MCF 10A (cell line): ENCODE measurements at regions of chr7 and their contacts with region 1.

Region 1: DNA sequence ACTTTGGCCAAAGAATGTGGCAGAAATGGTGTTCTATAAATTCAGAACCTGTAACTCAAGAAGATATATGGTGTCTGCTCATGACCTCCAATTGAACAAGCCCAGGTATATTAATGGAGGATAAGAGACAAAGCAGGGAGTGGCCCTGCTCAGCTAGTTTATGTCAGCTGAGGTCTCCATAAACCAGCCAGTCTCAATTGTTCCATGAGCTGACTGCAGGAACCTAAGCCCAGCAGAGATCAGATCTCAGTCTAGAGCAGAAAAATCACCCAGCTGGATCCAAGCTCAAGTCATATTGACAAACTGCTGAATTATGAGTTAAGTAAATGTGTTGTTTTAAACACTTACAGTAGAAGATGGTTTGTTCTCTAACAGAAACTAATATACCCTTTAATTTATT is 105.5 kb upstream of the SGCE start:
- DNase-seq: no peak
- H3K4me3 Mint-ChIP-seq: no peak overlapping the region
- H3K27ac Mint-ChIP-seq: no peak overlapping the region
- H3K4me1 Mint-ChIP-seq: no peaks in the 10 kb centered on the region
- H3K27me3 Mint-ChIP-seq: no peaks in the 10 kb centered on the region
- CTCF ChIP-seq: no peak

Region 2: GRCh38 chr7:94258418-94259300 is 502.8 kb before region 1 on chr7:
- CTCF ChIA-PET with region 1: no interaction called
- POLR2A ChIA-PET with region 1: no interaction called
- intact Hi-C with region 1: no loop called
- DNase-seq: no peak
- H3K4me3 Mint-ChIP-seq: no peak overlapping the region
- H3K27ac Mint-ChIP-seq: no peak overlapping the region
- H3K4me1 Mint-ChIP-seq: no peaks in the 10 kb centered on the region
- H3K27me3 Mint-ChIP-seq: no peaks in the 10 kb centered on the region
- CTCF ChIP-seq: no peak

Region 3: GRCh38 chr7:94779070-94779469 is 17.6 kb after region 1 on chr7:
- CTCF ChIA-PET with region 1: interaction called, 4 read pairs
- POLR2A ChIA-PET with region 1: no interaction called
- intact Hi-C with region 1: loop called (anchors 1 kb)
- DNase-seq: no peak
- H3K4me3 Mint-ChIP-seq: no peak overlapping the region
- H3K27ac Mint-ChIP-seq: no peak overlapping the region
- H3K4me1 Mint-ChIP-seq: no peaks in the 10 kb centered on the region
- H3K27me3 Mint-ChIP-seq: no peaks in the 10 kb centered on the region
- CTCF ChIP-seq: no peak